Heart right ventricle (tissue), 16 donors: ENCODE measurements at regions of chr7 and their contacts with region 1.

Region 1: DNA sequence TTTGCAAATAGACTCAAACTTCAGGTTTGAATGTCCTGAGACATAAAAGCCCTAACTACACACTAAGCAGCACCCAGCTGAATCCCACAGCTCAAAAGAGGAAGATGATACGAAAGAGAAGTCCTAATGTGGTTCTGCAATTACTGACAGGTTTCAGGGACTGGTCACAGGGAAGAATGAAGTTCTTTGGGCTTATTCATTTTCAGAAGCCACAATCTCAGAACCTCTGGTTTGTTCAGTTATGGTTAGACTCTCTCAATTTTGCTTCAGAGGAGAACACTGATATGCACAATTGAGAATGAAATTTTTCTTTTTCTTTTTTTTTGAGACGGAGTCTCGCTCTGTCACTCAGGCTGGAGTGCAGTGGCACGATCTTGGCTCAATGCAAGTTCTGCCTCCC is 94.6 kb upstream of the FAM180A start:
- DNase-seq: no peak
- ATAC-seq: no peak
- H3K4me3 ChIP-seq: no peak overlapping the region
- H3K27ac ChIP-seq: no peak overlapping the region
- H3K4me1 ChIP-seq: peaks cover 0 to under 1% (median 0%) of the 10 kb centered on the region in 9 donors
- H3K27me3 ChIP-seq: no peaks in the 10 kb centered on the region
- CTCF ChIP-seq: no peak

Region 2: DNA sequence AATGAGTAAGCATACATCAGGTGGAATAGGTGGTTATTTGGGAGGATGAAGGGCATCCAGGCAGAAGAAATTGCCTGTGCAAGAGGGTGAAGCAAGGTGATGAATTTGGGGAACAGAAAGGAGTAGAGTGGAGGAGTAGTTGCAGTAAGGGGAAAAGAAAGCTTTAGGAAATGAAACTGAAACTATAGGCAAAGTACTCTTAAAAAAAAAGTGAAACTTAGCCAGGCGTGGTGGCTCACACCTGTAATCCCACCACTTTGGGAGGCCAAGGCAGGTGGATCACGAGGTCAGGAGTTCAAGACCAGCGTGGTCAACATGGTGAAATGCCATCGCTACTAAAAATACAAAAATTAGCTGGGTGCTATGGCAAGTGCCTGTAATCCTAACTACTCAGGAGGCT is 267.9 kb before region 1 on chr7:
- intact Hi-C with region 1: no loop called
- DNase-seq: no peak
- ATAC-seq: no peak
- H3K4me3 ChIP-seq: no peak overlapping the region
- H3K27ac ChIP-seq: no peak overlapping the region
- H3K4me1 ChIP-seq: peaks cover 0 to 6% (median 0%) of the 10 kb centered on the region in 9 donors
- H3K27me3 ChIP-seq: no peaks in the 10 kb centered on the region
- CTCF ChIP-seq: no peak

Region 3: GRCh38 chr7:135801045-135801693 is 42.0 kb before region 1 on chr7:
- intact Hi-C with region 1: no loop called
- DNase-seq: peak in 1 of 2 donors; percentile 50
- ATAC-seq: peak; percentile 51 to 75 (median 64)
- H3K4me3 ChIP-seq: peak overlapping the region in 4 of 10 donors; percentile 11 to 14 (median 13)
- H3K27ac ChIP-seq: no peak overlapping the region
- H3K4me1 ChIP-seq: peaks cover 2 to 27% (median 13%) of the 10 kb centered on the region in 9 donors
- H3K27me3 ChIP-seq: no peaks in the 10 kb centered on the region
- CTCF ChIP-seq: peak; percentile 77 to 96 (median 87)

Region 4: DNA sequence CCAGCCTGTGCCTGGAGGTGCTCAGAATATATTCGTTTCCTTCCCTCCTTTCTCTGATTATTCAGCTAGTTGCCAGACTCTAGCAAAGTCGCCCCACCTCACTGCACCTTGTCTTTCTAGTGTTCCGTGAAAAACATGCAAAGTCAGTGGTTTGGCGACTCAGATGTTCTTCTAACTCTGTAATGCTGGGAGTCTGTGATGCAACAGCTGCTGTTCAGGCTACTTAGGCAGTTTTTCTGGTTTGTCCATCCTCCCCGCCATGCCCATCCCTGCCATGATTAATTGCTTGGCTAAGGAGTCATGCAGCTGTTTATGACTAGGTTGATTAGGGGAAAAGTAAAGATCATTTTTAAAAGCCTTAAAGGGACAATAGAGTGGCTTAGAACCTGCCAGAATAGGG is 34.6 kb after region 1 on chr7:
- intact Hi-C with region 1: loop called in 1 of 10 experiments (anchors 5 kb)
- DNase-seq: no peak
- ATAC-seq: no peak
- H3K4me3 ChIP-seq: no peak overlapping the region
- H3K27ac ChIP-seq: no peak overlapping the region
- H3K4me1 ChIP-seq: peaks cover 0 to 7% (median 0%) of the 10 kb centered on the region in 9 donors
- H3K27me3 ChIP-seq: no peaks in the 10 kb centered on the region
- CTCF ChIP-seq: no peak